Activated CD4-positive, alpha-beta T cell treated with anti-CD3 and anti-CD28 coated beads for 36 hours (primary cell): ENCODE measurements at regions of chr15 and their contacts with region 1.

Region 1: GRCh38 chr15:71301958-71302621 is 186.8 kb downstream of the THSD4 start:
- DNase-seq: no peak
- ATAC-seq: no peak
- H3K4me3 Mint-ChIP-seq: no peak overlapping the region
- H3K27ac Mint-ChIP-seq: no peak overlapping the region
- H3K4me1 Mint-ChIP-seq: no peaks in the 10 kb centered on the region
- H3K27me3 Mint-ChIP-seq: peaks cover 2% of the 10 kb centered on the region

Region 2: GRCh38 chr15:71003319-71003718 is 298.8 kb before region 1 on chr15:
- CTCF ChIA-PET with region 1: no interaction called
- POLR2A ChIA-PET with region 1: no interaction called
- intact Hi-C with region 1: loop called in 1 of 2 experiments (anchors 10 kb)
- DNase-seq: no peak
- ATAC-seq: no peak
- H3K4me3 Mint-ChIP-seq: no peak overlapping the region
- H3K27ac Mint-ChIP-seq: no peak overlapping the region
- H3K4me1 Mint-ChIP-seq: no peaks in the 10 kb centered on the region
- H3K27me3 Mint-ChIP-seq: peaks cover 11% of the 10 kb centered on the region